Activated CD4-positive, alpha-beta T cell treated with anti-CD3 and anti-CD28 coated beads, Interleukin-2, amount 10 ng/mL, durations not matched to agents 24 days and 14 days (primary cell): ENCODE measurements at regions of chr14 and their contacts with region 1.

Region 1: DNA sequence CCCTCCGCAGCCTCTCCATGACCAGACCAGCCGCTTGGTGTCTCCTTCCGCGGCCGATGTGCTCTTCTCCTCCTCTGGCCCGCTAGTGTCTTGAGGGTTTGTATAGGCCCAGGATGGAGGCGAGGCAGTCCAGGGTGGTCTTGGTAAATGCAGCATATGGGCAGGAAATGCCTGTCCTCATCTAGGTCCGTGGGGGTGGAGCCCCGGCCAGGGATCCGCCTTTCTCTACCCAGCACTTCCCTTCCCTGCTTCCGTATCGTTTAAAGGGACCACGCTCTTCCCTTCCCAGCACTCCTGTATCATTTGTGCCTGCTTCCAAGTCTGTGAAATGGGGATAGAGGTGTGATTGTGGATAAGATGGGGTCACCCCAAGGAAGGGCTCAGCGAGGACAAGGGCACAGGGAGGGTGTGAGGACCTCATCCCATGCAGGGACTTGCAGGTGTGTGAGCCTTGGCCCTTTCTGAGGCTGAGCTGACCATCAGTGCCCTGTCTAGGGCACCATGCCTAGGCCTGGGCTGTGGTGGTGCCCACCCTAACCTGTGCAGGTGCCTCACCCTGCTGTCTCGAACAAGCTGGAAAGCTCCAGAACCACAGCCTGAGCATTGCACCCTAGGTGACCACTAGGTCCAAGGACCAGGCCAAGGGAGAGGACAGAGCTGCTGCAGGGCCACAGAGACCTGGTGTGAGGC is 326.8 kb upstream of the RTL1 start:
- DNase-seq: no peak
- H3K4me3 Mint-ChIP-seq: no peak overlapping the region
- H3K27ac Mint-ChIP-seq: no peak overlapping the region
- H3K4me1 Mint-ChIP-seq: no peaks in the 10 kb centered on the region
- H3K27me3 Mint-ChIP-seq: no peaks in the 10 kb centered on the region

Region 2: DNA sequence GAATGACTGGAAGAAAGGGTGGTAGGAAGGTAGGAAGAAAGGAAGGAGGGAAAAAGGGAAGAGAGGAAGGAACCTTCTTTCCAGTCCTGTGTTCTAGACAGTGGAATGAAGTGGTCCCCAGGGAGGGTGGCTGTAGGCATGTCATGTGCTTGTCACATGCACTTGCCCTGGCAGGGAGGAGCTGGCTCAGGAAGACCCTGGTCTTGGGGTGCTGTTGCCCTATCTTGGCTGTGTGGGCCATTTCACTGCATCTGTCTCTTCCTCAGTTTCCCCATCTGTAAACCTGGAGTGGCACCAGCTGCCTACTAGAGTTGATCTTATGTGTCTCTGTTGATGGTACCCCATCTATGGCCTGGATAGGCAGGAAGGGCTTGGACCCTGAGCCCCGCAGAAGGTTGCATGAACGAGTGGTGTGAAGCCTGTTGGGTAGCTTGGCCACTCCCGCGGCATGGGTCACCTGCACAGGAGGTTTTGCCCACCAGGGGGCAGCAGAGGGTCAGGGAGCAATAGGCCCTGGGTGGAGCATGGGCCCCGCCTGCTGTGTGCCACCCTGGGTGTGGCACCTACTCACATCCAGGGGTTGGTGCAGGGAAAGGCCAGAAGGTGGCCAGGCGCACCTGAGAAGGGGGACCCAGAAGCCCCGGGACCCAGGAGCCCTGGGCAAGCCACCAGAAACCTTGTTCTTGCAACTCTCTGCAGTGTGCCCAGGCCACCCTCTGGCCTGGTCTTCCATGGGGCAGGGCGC is 379.3 kb before region 1 on chr14:
- intact Hi-C with region 1: loop called (anchors 5 kb)
- DNase-seq: peak; percentile 93
- H3K4me3 Mint-ChIP-seq: no peak overlapping the region
- H3K27ac Mint-ChIP-seq: no peak overlapping the region
- H3K4me1 Mint-ChIP-seq: peaks cover 6% of the 10 kb centered on the region
- H3K27me3 Mint-ChIP-seq: no peaks in the 10 kb centered on the region

Region 3: DNA sequence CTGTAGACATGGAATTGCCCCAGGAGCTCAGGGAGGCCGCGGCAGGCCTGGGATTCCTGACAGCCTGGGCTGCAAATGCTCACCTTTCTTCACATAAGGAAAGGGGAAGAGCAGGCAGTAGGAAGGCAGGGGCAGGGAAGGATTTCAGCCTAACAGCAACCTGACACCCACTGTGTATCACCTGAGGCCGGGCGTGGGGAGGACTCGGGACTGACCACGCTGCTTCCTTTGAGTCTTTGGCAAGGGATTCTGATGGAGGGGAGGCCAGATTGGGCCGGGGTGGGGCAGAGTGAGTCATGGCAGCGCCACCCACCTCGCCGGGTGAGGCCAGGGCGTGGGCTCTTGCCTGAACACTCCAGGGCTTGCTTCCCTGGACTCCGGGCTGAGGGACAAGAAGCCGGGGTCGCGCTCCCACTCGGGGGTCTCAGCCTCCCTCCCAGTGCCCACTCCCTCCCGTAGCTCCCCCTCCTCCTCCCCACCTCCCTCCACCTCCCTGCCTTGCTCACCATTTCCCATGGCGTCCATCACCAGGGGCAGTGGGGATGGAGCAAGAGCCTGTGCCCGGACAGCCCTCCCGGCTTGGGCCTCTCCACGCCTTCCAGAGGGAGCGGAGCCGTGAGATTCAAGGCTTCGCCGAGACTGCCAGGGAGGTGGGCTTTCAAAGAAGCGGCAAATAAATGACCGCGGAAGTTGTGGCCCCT is 78.9 kb before region 1 on chr14:
- intact Hi-C with region 1: no loop called
- DNase-seq: no peak
- H3K4me3 Mint-ChIP-seq: no peak overlapping the region
- H3K27ac Mint-ChIP-seq: no peak overlapping the region
- H3K4me1 Mint-ChIP-seq: no peaks in the 10 kb centered on the region
- H3K27me3 Mint-ChIP-seq: peaks cover 3% of the 10 kb centered on the region